Ovary (tissue), 10 donors: ENCODE measurements at regions of chr14 and their contacts with region 1.

Region 1: GRCh38 chr14:56474419-56475022 is 105.1 kb upstream of the TMEM260 start:
- DNase-seq: no peak
- H3K4me3 ChIP-seq: no peak overlapping the region
- H3K27ac ChIP-seq: no peak overlapping the region
- H3K4me1 ChIP-seq: no peaks in the 10 kb centered on the region
- H3K27me3 ChIP-seq: no peaks in the 10 kb centered on the region
- CTCF ChIP-seq: peak; percentile 32 to 58 (median 53)
- EP300 ChIP-seq: no peak
- POLR2A ChIP-seq: no peak

Region 2: GRCh38 chr14:55446218-55446654 is 1028.3 kb before region 1 on chr14:
- intact Hi-C with region 1: loop called in 2 of 4 experiments (anchors 10 kb)
- DNase-seq: peak in 3 of 5 donors; percentile 40 to 65 (median 41)
- H3K4me3 ChIP-seq: no peak overlapping the region
- H3K27ac ChIP-seq: no peak overlapping the region
- H3K4me1 ChIP-seq: peaks cover under 1% of the 10 kb centered on the region
- H3K27me3 ChIP-seq: no peaks in the 10 kb centered on the region
- CTCF ChIP-seq: peak in 2 of 3 donors; percentile 9 to 29
- EP300 ChIP-seq: no peak
- POLR2A ChIP-seq: no peak

Region 3: GRCh38 chr14:55579724-55580469 is 894.6 kb before region 1 on chr14 and contains the start of gene KTN1:
- intact Hi-C with region 1: loop called in 1 of 4 experiments (anchors 5 kb)
- DNase-seq: peak; percentile 79 to 86 (median 81)
- H3K4me3 ChIP-seq: peak within 1 kb of the TSS; percentile 51
- H3K27ac ChIP-seq: peak within 1 kb of the TSS; percentile 70 to 93
- H3K4me1 ChIP-seq: peaks cover 9% of the 10 kb centered on the region
- H3K27me3 ChIP-seq: no peaks in the 10 kb centered on the region
- CTCF ChIP-seq: no peak
- EP300 ChIP-seq: no peak
- POLR2A ChIP-seq: peak; percentile 55
- total RNA-seq, gene KTN1: 98.0 to 144 (median 129) TPM